Dendritic cell treated with granulocyte-macrophage colony-stimulating factor and Interleukin-4, amounts not matched to agents 40 ng/mL and 50 ng/mL, for 4 days (primary cell): ENCODE measurements at regions of chr15 and their contacts with region 1.

Region 1: GRCh38 chr15:68252925-68253534 is 23.5 kb upstream of the CLN6 start:
- H3K4me3 Mint-ChIP-seq: no peak overlapping the region
- H3K27ac Mint-ChIP-seq: no peak overlapping the region
- H3K4me1 Mint-ChIP-seq: peaks cover 37% of the 10 kb centered on the region
- H3K27me3 Mint-ChIP-seq: no peaks in the 10 kb centered on the region

Region 2: GRCh38 chr15:68124700-68125099 is 128.3 kb before region 1 on chr15:
- intact Hi-C with region 1: no loop called
- H3K4me3 Mint-ChIP-seq: no peak overlapping the region
- H3K27ac Mint-ChIP-seq: no peak overlapping the region
- H3K4me1 Mint-ChIP-seq: peaks cover 46% of the 10 kb centered on the region
- H3K27me3 Mint-ChIP-seq: no peaks in the 10 kb centered on the region

Region 3: DNA sequence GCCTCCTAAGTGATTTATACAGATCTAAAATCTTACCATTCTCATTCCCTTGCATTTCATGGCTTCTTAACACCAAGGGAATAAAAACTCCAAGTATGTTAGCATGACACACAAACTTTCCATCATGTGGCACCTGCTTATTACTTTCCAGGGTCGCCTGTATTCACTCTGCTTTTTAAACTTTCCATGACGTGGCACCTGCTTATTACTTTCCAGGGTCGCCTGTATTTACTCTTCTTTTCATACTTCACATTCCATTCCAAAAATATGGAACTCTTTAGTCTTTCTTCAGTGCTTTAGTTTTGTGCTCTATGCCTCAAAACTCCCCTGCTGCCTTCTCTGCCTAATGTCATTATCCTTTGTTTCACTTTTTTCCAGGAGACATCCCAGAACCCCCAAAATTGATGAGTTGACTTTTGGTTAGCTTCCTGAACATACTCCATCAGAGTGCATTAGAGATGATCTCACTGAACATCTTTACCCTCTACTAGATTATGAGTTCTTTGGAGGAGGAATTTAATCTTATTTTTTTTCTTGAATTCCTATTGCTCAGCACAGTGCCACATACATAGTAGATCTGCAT is 94.9 kb before region 1 on chr15:
- intact Hi-C with region 1: no loop called
- H3K4me3 Mint-ChIP-seq: no peak overlapping the region
- H3K27ac Mint-ChIP-seq: no peak overlapping the region
- H3K4me1 Mint-ChIP-seq: no peaks in the 10 kb centered on the region
- H3K27me3 Mint-ChIP-seq: no peaks in the 10 kb centered on the region

Region 4: DNA sequence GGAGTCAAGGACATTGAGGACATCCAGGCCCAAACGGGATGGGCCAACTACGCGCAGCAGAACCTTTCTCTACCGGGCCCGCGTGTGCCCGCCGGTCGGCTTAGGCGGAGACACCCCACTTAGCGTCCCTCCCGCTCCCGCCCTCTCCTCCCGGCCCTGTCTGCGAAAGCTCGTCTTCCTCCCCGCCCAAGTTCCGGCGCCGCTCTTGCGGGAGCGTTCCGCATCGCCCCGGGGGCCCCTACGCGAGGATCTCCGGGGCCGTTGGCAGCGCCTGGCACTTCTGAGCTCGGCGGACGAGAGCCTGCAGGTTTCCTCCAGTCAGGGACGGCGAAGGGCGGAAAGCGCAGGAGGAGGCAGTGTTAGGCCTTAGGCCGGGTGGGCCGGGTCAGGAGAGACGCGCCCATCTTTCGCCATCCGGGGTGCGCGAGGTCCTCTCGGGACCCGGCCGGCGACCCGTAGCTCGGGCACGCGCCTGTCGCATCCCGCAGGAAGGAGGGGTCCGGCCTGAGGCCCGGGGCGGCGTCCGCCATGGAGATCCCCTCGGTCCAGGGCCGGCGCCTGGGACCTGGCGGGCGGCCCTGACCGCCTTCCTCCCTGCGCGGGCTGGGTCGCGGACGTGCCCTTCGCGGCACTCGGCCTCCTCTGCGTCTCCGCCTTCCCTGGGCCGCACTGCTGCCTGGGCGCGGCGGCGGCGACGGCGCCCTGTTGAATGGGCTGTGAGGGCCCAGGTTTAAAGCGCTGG is 24.7 kb after region 1 on chr15 and contains the start of gene FEM1B:
- intact Hi-C with region 1: loop called (anchors 2 kb)
- H3K4me3 Mint-ChIP-seq: peak within 1 kb of the TSS; percentile 98
- H3K27ac Mint-ChIP-seq: peak within 1 kb of the TSS; percentile 96
- H3K4me1 Mint-ChIP-seq: peaks cover 55% of the 10 kb centered on the region
- H3K27me3 Mint-ChIP-seq: no peaks in the 10 kb centered on the region

Region 5: GRCh38 chr15:68295014-68295805 is 42.2 kb after region 1 on chr15:
- intact Hi-C with region 1: no loop called
- H3K4me3 Mint-ChIP-seq: no peak overlapping the region
- H3K27ac Mint-ChIP-seq: no peak overlapping the region
- H3K4me1 Mint-ChIP-seq: peaks cover 29% of the 10 kb centered on the region
- H3K27me3 Mint-ChIP-seq: no peaks in the 10 kb centered on the region

Region 6: DNA sequence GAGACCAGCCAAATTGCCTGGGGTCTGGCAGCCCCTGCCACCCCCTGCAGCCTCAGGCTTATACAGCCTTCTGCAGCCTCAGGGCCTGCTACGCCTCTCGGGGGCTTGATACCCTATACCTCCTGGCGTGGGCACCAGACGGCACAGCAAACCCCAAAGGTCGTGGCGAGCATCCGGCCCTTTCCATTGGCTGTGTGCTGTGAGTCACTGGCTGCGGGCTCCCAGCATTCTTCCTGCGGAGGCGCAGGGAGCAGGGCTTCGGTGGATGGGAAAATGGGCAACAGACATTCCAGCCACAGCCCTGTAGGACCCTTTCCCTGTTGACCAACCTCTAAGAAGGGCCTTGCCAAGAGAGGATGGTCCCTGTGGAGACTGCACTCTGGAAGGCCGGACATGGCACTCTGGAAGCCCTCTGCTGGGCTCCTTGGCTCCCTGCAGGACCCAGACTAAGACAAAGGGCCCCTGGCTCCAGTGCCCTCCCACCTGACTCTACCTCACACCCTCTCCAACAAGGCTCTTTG is 119.3 kb after region 1 on chr15:
- intact Hi-C with region 1: loop called (anchors 1 kb)
- H3K4me3 Mint-ChIP-seq: no peak overlapping the region
- H3K27ac Mint-ChIP-seq: no peak overlapping the region
- H3K4me1 Mint-ChIP-seq: peaks cover 32% of the 10 kb centered on the region
- H3K27me3 Mint-ChIP-seq: peaks cover 4% of the 10 kb centered on the region

Region 7: DNA sequence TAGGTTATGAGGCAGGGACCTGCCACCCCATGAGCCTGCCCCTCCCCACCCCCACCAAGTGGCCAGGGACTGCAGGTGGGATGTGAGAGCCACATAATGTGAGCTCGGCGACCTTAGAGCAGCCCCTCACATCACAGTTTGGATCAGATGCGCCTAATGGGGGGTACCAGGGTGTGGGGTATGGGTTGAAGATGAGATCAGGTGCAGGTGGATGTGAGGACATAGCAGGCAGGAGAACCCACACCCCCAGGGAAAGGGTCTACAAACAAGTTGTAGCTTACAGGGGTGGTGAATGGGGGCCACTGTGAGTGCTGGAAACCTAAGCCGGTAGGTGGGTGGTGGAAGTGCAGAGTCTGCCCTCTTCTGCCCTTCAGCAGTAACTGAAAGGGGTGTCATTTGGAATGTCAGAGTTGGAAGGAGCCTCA is 419.8 kb after region 1 on chr15:
- intact Hi-C with region 1: loop called (anchors 10 kb)
- H3K4me3 Mint-ChIP-seq: no peak overlapping the region
- H3K27ac Mint-ChIP-seq: no peak overlapping the region
- H3K4me1 Mint-ChIP-seq: peaks cover 22% of the 10 kb centered on the region
- H3K27me3 Mint-ChIP-seq: peaks cover 9% of the 10 kb centered on the region